ENCODE measurements at regions of chr10 and their contacts with region 1.

Region 1: DNA sequence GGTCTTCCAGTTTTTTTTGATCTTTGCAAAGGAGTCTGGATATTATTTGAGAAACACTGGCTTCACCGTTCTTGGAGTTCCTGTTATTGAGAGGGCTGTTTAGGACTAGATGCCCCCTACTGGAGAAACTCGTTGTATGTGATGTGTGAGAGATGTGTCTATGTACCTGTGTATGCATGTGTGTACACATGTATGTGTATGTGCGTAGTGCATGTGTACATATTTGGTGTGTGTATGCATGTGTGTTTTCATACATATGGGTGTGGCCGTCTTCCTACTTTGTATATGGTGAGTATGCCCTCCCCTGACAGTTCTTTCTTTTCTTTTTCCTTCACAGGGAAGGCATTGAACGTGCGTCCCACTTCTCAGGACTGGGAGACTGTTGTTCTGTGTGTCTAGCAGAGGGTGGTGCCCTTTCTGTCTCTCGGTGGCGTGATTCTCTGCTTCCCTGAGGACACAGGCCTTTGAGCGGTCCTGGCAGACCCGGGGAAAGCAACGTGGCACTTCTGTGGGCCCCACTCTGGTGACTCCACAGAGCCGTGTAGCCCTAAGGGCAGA is 3.0 kb upstream of the CALHM3 start:
- DNase-seq: no peak
- H3K4me3 Mint-ChIP-seq: no peak overlapping the region
- H3K27ac Mint-ChIP-seq: no peak overlapping the region
- H3K4me1 Mint-ChIP-seq: peaks cover 4% of the 10 kb centered on the region
- H3K27me3 Mint-ChIP-seq: no peaks in the 10 kb centered on the region

Region 2: DNA sequence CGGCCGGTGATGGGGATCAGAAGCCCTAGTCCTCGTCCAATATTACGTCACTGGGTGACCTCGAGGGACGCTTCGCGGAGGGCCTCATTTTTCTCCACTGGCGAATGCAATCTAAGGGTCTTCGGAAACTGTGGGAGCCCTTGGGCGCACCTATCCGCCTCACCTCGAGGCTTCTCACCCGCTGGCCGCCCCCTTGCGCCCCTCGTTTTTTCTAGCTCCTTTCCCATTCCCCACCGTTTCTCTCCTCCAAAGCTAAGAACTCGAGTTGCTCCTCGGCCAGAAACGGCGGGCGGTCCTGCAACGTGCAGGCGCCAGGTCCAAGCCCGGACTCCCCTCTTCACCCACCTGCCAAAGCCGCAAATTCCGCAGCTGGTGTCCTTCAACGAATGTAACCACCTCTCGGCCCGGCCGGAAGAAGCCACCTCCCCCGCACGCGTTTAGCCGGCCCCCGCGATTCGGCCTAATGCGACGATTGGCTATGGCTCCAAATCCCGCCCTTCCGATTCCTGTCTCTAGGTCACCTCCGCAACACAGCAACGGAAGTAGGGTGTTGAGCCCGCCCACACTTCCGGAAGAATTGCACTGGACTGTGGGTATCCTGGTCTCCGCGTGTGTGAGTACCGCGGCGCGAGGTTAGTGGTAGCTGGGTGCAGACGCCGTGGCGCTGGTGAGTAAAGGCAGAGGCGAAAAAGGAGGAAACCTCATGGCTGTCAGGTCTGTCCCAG is 85.8 kb before region 1 on chr10 and contains the starts of genes ATP5MK and PDCD11:
- CTCF ChIA-PET with region 1: interaction called, 4 read pairs
- POLR2A ChIA-PET with region 1: no interaction called
- intact Hi-C with region 1: loop called (anchors 5 kb)
- DNase-seq: peak; percentile 98
- H3K4me3 Mint-ChIP-seq: peak within 1 kb of the TSS; percentile 95
- H3K27ac Mint-ChIP-seq: peak within 1 kb of the TSS; percentile 88
- H3K4me1 Mint-ChIP-seq: peaks cover 59% of the 10 kb centered on the region
- H3K27me3 Mint-ChIP-seq: no peaks in the 10 kb centered on the region
- total RNA-seq, gene ATP5MK: 436 to 438 TPM
- total RNA-seq, gene PDCD11: 56.4 to 56.7 TPM

Region 3: GRCh38 chr10:103416436-103417147 is 65.5 kb before region 1 on chr10:
- CTCF ChIA-PET with region 1: interaction called, 42 read pairs
- POLR2A ChIA-PET with region 1: no interaction called
- intact Hi-C with region 1: loop called (anchors 1 kb)
- DNase-seq: peak; percentile 61
- H3K4me3 Mint-ChIP-seq: no peak overlapping the region
- H3K27ac Mint-ChIP-seq: no peak overlapping the region
- H3K4me1 Mint-ChIP-seq: no peaks in the 10 kb centered on the region
- H3K27me3 Mint-ChIP-seq: no peaks in the 10 kb centered on the region

Region 4: GRCh38 chr10:103451831-103452505 is 30.1 kb before region 1 on chr10 and contains the start of gene CALHM2:
- CTCF ChIA-PET with region 1: interaction called, 30 read pairs
- POLR2A ChIA-PET with region 1: no interaction called
- intact Hi-C with region 1: loop called (anchors 1 kb)
- DNase-seq: peak; percentile 75
- H3K4me3 Mint-ChIP-seq: peak within 1 kb of the TSS; percentile 90
- H3K27ac Mint-ChIP-seq: peak within 1 kb of the TSS; percentile 91
- H3K4me1 Mint-ChIP-seq: peaks cover 44% of the 10 kb centered on the region
- H3K27me3 Mint-ChIP-seq: no peaks in the 10 kb centered on the region
- total RNA-seq, gene CALHM2: 21.6 to 22.5 TPM